Activated CD4-positive, alpha-beta T cell treated with anti-CD3 and anti-CD28 coated beads for 36 hours (primary cell): ENCODE measurements at regions of chr1 and their contacts with region 1.

Region 1: DNA sequence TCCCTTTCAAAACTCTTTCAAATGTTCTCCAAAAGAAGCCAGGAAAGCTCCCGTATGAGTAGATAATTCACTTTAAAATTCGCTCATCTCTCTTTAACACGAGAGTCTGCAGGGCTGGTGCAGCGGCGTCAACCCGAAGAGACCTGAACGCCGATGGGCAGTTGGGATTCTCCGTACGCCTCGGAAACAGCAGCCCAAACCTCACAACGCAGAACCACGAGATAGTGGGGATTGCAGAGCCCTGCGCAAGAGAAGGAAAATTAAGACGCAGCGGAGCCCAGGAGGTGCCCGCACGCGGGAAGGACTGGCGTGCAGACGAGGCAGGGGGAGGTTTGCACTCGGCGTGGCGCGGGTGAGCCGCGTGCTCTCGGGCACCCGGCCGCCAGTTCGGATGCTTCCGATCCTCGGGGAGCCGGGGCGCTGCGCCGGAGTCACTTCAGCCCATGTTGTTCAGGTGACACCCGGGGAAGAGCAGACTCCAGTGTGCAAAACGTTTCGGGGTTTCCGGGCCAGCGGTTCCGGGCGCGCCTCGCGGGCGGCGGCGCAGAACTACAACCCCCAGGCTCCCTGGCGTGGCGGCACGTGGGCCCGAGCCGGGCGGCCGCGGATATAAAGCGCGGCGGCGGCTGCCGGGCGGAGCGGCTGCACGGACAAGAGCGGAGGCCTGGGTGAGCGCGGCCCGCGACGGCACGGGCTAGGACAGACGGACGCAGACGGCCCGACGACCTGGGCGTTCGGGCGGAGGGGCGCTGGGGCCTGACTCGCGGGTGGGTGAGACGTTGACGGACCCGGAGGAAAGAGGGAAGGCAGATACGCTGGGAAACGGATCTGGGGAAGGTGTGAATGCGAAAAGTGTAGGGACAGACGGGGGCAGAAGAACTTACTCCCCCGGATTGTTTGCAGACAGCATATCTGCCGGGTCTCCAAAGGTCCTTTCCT is at the start of gene NPL:
- DNase-seq: peak; percentile 90
- ATAC-seq: peak; percentile 95
- H3K4me3 Mint-ChIP-seq: peak within 1 kb of the TSS; percentile 79
- H3K27ac Mint-ChIP-seq: peak within 1 kb of the TSS; percentile 68
- H3K4me1 Mint-ChIP-seq: peaks cover 11% of the 10 kb centered on the region
- H3K27me3 Mint-ChIP-seq: peaks cover 4% of the 10 kb centered on the region
- total RNA-seq, gene NPL: 4.0 to 5.6 TPM

Region 2: GRCh38 chr1:182029379-182030331 is 759.8 kb before region 1 on chr1:
- CTCF ChIA-PET with region 1: no interaction called
- POLR2A ChIA-PET with region 1: no interaction called
- intact Hi-C with region 1: loop called in 1 of 2 experiments (anchors 2 kb)
- DNase-seq: peak; percentile 99
- ATAC-seq: peak; percentile 96
- H3K4me3 Mint-ChIP-seq: peak overlapping the region; percentile 86
- H3K27ac Mint-ChIP-seq: peak overlapping the region; percentile 97
- H3K4me1 Mint-ChIP-seq: peaks cover 11% of the 10 kb centered on the region
- H3K27me3 Mint-ChIP-seq: no peaks in the 10 kb centered on the region

Region 3: GRCh38 chr1:182446033-182446669 is 343.3 kb before region 1 on chr1:
- CTCF ChIA-PET with region 1: interaction called, 8 read pairs
- POLR2A ChIA-PET with region 1: no interaction called
- intact Hi-C with region 1: loop called (anchors 1 kb)
- DNase-seq: peak; percentile 45
- ATAC-seq: peak; percentile 66
- H3K4me3 Mint-ChIP-seq: no peak overlapping the region
- H3K27ac Mint-ChIP-seq: no peak overlapping the region
- H3K4me1 Mint-ChIP-seq: peaks cover 2% of the 10 kb centered on the region
- H3K27me3 Mint-ChIP-seq: no peaks in the 10 kb centered on the region

Region 4: GRCh38 chr1:182588500-182589452 is 200.6 kb before region 1 on chr1 and contains the start of gene RNASEL:
- CTCF ChIA-PET with region 1: interaction called, 772 read pairs
- POLR2A ChIA-PET with region 1: no interaction called
- intact Hi-C with region 1: loop called in 1 of 2 experiments (anchors 2 kb)
- DNase-seq: peak; percentile 74
- ATAC-seq: peak; percentile 92
- H3K4me3 Mint-ChIP-seq: peak within 1 kb of the TSS; percentile 89
- H3K27ac Mint-ChIP-seq: peak within 1 kb of the TSS; percentile 99
- H3K4me1 Mint-ChIP-seq: peaks cover 45% of the 10 kb centered on the region
- H3K27me3 Mint-ChIP-seq: no peaks in the 10 kb centered on the region
- total RNA-seq, gene RNASEL: 3.7 to 4.0 TPM

Region 5: GRCh38 chr1:182725259-182726255 is 63.9 kb before region 1 on chr1:
- CTCF ChIA-PET with region 1: no interaction called
- POLR2A ChIA-PET with region 1: no interaction called
- intact Hi-C with region 1: no loop called
- DNase-seq: no peak
- ATAC-seq: no peak
- H3K4me3 Mint-ChIP-seq: no peak overlapping the region
- H3K27ac Mint-ChIP-seq: no peak overlapping the region
- H3K4me1 Mint-ChIP-seq: peaks cover 6% of the 10 kb centered on the region
- H3K27me3 Mint-ChIP-seq: peaks cover 7% of the 10 kb centered on the region

Region 6: GRCh38 chr1:183090391-183091006 is 301.1 kb after region 1 on chr1:
- CTCF ChIA-PET with region 1: no interaction called
- POLR2A ChIA-PET with region 1: no interaction called
- intact Hi-C with region 1: no loop called
- DNase-seq: no peak
- ATAC-seq: no peak
- H3K4me3 Mint-ChIP-seq: no peak overlapping the region
- H3K27ac Mint-ChIP-seq: no peak overlapping the region
- H3K4me1 Mint-ChIP-seq: no peaks in the 10 kb centered on the region
- H3K27me3 Mint-ChIP-seq: peaks cover 11% of the 10 kb centered on the region

Region 7: DNA sequence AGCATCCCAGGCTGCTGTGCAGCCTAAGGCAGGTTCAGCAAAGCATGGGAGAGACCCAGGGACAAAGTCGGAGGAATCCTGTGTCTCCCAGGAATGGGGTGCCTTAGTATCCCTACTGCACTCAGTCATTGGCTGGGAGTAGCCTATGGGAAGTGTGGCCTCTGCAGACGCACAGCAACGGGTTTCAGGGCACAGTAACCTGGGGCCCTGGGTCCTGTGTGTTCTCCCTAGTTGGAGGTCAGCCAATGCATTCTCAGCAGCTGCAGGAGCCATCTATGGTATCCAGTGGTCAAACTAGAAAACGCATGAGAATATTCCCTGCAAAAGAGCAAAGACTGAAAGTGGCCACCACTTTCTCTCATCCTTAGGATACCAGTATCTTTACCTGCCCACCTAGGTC is 1583.7 kb after region 1 on chr1:
- CTCF ChIA-PET with region 1: no interaction called
- POLR2A ChIA-PET with region 1: no interaction called
- intact Hi-C with region 1: no loop called
- DNase-seq: no peak
- ATAC-seq: no peak
- H3K4me3 Mint-ChIP-seq: no peak overlapping the region
- H3K27ac Mint-ChIP-seq: no peak overlapping the region
- H3K4me1 Mint-ChIP-seq: no peaks in the 10 kb centered on the region
- H3K27me3 Mint-ChIP-seq: peaks cover 10% of the 10 kb centered on the region